ENCODE measurements at regions of chr2 and their contacts with region 1.

Region 1: DNA sequence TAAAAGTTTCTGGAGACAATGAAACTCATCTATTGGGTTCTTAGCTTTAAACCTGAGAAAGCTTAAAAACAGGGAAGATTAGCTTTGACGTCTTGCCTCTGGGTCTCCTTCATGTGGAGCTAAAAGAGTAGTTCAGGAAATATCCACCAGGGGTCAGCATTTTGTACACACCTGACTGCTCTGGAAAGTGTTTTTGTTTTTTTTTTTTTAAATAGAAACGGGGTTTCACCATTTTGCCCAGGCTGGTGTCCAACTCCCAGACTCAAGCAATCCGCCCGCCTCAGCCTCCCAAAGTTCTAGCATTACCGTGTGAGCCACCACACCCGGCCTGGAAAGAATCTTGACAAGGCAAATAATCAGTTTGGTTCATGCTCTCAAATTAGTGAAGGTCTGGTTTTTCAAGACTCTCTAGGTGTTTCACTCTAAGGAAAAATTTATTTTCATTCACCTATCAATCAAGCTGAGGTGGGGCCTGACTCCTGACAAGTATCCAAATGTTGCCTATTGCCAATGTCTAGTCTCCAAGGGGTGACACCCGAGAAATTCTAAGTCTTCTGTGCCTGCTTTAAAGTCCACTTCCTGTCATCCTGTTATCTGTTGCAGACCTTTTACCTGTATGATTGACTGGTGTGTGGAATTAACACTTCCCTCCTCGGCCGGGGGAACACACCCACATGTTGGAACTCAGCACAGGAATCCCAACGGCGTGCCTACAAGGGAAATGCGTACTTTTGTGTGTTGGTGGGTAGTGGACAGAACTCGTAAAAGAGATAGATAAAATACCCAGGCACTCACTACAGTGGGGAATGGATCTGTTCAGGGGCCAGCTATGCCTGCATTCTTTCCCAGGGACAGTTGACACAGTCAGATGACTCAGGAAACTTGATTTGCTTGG is 11.3 kb downstream of the IL1RN start:
- DNase-seq: peak; percentile 88
- ATAC-seq: peak; percentile 82
- H3K4me3 ChIP-seq: peak overlapping the region in 1 of 5 experiments; percentile 19
- H3K4me3 Mint-ChIP-seq: peak overlapping the region; percentile 71
- H3K27ac ChIP-seq: peak overlapping the region in 1 of 2 donors; percentile 24
- H3K27ac Mint-ChIP-seq: peak overlapping the region; percentile 73
- H3K4me1 ChIP-seq: peaks cover 11 to 13% of the 10 kb centered on the region in 2 donors
- H3K4me1 Mint-ChIP-seq: peaks cover 15% of the 10 kb centered on the region
- H3K27me3 ChIP-seq: no peaks in the 10 kb centered on the region
- H3K27me3 Mint-ChIP-seq: no peaks in the 10 kb centered on the region
- CTCF ChIP-seq: peak; percentile 86

Region 2: DNA sequence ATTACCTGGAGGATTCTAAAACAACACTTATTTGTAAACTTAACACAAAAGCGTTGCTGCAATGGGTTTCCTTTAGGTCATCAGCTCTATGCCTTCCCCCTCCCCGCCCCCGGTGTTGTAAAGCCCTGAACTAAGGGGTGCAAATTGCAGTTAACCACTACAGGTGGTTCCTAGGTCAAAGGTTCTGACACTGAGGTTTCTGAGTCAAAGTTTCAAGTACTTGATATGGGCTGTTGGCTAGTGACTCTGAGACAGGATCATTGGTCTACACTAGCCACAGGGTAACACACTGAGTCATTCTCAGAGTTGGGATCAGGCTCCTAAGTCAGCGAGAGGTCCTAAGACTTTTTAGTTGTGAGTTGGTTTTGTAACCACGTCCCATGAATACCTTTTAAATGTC is 317.5 kb before region 1 on chr2:
- CTCF ChIA-PET with region 1: no interaction called
- POLR2A ChIA-PET with region 1: no interaction called
- intact Hi-C with region 1: no loop called
- DNase-seq: no peak
- ATAC-seq: no peak
- H3K4me3 ChIP-seq: no peak overlapping the region
- H3K4me3 Mint-ChIP-seq: no peak overlapping the region
- H3K27ac ChIP-seq: no peak overlapping the region
- H3K27ac Mint-ChIP-seq: no peak overlapping the region
- H3K4me1 ChIP-seq: no peaks in the 10 kb centered on the region
- H3K4me1 Mint-ChIP-seq: no peaks in the 10 kb centered on the region
- H3K27me3 ChIP-seq: no peaks in the 10 kb centered on the region
- H3K27me3 Mint-ChIP-seq: no peaks in the 10 kb centered on the region
- CTCF ChIP-seq: no peak

Region 3: DNA sequence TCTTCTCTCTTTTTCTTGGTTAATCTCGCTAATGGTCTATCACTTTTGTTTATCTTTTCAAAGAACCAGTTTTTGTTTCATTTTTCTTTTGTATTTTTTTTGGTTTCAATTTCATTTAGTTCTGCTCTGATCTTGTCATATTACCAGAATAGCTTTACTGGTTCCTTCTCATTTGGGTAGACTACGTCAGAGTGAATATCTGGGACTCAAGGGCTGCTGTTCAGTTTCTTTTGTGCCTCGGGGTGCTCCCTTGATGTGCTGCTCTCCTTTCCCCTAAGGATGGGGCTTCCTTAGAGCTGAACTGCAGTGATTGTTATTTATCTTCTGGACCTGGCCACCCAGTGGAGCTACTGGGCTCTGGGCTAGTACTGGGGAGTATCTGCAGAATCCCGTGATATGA is 40.6 kb before region 1 on chr2:
- CTCF ChIA-PET with region 1: interaction called, 10 read pairs
- POLR2A ChIA-PET with region 1: no interaction called
- intact Hi-C with region 1: no loop called
- DNase-seq: peak; percentile 63
- ATAC-seq: peak; percentile 41
- H3K4me3 ChIP-seq: peak overlapping the region in 3 of 5 experiments; percentile 10 to 52 (median 15)
- H3K4me3 Mint-ChIP-seq: peak overlapping the region; percentile 47
- H3K27ac ChIP-seq: no peak overlapping the region
- H3K27ac Mint-ChIP-seq: peak overlapping the region; percentile 5
- H3K4me1 ChIP-seq: peaks cover 7 to 11% of the 10 kb centered on the region in 2 donors
- H3K4me1 Mint-ChIP-seq: peaks cover 13% of the 10 kb centered on the region
- H3K27me3 ChIP-seq: no peaks in the 10 kb centered on the region
- H3K27me3 Mint-ChIP-seq: peaks cover 13% of the 10 kb centered on the region
- CTCF ChIP-seq: no peak

Region 4: DNA sequence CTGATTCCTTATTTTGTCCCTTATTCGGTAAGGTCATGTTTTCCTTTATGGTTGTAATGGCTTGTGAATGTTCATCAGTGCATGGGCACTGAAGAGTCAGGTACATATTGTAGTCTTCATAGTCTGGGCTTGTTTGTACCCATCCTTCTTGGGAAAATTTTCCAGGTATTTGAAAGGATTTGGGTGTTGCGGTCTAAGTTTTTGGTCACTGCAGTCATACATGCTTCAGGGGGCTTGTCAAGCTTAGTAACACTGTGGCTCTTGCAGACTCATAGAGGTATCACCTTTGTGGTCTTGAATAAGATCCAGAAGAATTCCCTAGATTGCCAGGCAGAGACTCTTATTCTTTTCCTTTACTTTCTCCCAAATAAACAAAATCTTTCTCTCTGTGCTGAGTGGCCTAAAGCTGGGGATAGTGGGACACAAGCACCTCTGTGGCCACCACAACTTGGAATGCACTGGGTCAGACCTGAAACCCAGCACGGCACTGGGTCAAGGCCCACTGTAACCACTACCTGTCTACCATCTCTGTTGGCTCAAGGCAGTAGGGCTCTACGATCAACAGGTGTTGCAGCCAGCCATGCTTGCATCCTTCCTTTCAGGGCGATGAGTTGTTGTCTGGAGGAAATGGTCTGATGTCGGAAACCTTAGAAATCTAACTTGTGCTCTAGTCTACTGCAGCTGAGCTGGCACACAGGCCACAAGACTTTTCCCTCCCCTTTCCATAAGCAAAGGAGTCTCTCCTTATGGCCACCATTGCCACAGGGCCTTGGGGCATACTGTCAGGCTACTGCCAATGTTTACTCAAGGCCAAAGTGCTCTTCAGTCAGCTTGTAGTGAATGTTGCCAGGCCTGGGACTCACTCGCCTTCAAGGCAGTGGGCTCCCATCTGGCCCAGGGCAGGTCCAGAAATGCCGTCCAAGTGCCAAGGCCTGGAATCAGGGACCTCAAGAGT is 10.2 kb after region 1 on chr2:
- CTCF ChIA-PET with region 1: interaction called, 39 read pairs
- POLR2A ChIA-PET with region 1: no interaction called
- intact Hi-C with region 1: no loop called
- DNase-seq: peak; percentile 62
- ATAC-seq: peak; percentile 70
- H3K4me3 ChIP-seq: no peak overlapping the region
- H3K4me3 Mint-ChIP-seq: peak overlapping the region; percentile 48
- H3K27ac ChIP-seq: peak overlapping the region; percentile 52 to 89
- H3K27ac Mint-ChIP-seq: peak overlapping the region; percentile 91
- H3K4me1 ChIP-seq: peaks cover 20 to 24% of the 10 kb centered on the region in 2 donors
- H3K4me1 Mint-ChIP-seq: peaks cover 26% of the 10 kb centered on the region
- H3K27me3 ChIP-seq: no peaks in the 10 kb centered on the region
- H3K27me3 Mint-ChIP-seq: no peaks in the 10 kb centered on the region
- CTCF ChIP-seq: no peak

Region 5: GRCh38 chr2:113181258-113182051 is 42.8 kb after region 1 on chr2:
- CTCF ChIA-PET with region 1: interaction called, 327 read pairs
- POLR2A ChIA-PET with region 1: no interaction called
- intact Hi-C with region 1: no loop called
- DNase-seq: no peak
- ATAC-seq: peak; percentile 37
- H3K4me3 ChIP-seq: no peak overlapping the region
- H3K4me3 Mint-ChIP-seq: peak overlapping the region; percentile 49
- H3K27ac ChIP-seq: peak overlapping the region; percentile 19 to 73
- H3K27ac Mint-ChIP-seq: peak overlapping the region; percentile 90
- H3K4me1 ChIP-seq: peaks cover 72 to 91% of the 10 kb centered on the region in 2 donors
- H3K4me1 Mint-ChIP-seq: peaks cover 90% of the 10 kb centered on the region
- H3K27me3 ChIP-seq: no peaks in the 10 kb centered on the region
- H3K27me3 Mint-ChIP-seq: no peaks in the 10 kb centered on the region
- CTCF ChIP-seq: no peak

Region 6: DNA sequence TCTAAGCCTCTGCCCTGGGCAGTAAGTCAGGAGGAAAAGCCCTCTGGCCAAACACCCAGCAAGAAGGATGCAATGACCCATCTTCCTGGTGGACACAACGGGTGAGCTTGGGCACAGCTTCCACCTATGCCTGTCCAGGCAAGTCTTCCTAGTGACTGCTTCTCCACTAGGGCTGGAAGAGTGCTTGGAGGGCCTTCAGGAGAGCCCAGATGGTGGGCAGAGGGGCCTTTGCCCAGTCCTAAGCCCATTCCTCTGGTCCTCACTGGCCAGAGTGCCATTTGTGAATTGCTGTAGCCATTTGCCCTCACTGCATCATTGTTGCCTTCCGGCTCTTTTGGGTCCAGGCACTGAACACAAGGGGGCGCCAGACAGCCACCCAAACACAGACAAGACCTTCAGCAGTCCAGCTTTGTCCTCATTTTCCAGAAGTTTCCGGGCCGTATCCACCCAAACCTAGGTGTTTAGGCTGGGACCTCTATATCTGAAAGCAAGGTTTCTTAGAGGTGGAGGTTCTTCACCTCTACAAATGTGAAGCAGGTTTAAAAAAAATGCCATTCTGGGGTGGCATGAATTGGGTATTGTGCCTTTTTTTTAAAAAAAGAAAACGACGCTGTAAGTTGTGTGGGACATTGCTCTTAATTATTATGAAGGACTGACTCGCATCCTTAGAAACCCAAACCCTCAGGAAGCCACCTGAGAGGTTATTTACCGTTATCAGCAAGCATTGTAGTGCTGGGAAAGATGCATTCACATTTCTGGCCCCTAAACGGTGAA is 110.5 kb after region 1 on chr2:
- CTCF ChIA-PET with region 1: interaction called, 11 read pairs
- POLR2A ChIA-PET with region 1: no interaction called
- intact Hi-C with region 1: loop called (anchors 5 kb)
- DNase-seq: peak; percentile 84
- ATAC-seq: peak; percentile 58
- H3K4me3 ChIP-seq: no peak overlapping the region
- H3K4me3 Mint-ChIP-seq: no peak overlapping the region
- H3K27ac ChIP-seq: no peak overlapping the region
- H3K27ac Mint-ChIP-seq: peak overlapping the region; percentile 28
- H3K4me1 ChIP-seq: peaks cover 6 to 16% of the 10 kb centered on the region in 2 donors
- H3K4me1 Mint-ChIP-seq: peaks cover 13% of the 10 kb centered on the region
- H3K27me3 ChIP-seq: no peaks in the 10 kb centered on the region
- H3K27me3 Mint-ChIP-seq: no peaks in the 10 kb centered on the region
- CTCF ChIP-seq: peak; percentile 94

Measured in B cell (primary cell).